ENCODE measurements at regions of chrX and their contacts with region 1.

Region 1: GRCh38 chrX:68807818-68808217 is 21.0 kb upstream of the EFNB1 start:
- DNase-seq: no peak
- H3K4me3 ChIP-seq: no peak overlapping the region
- H3K27ac ChIP-seq: no peak overlapping the region
- H3K4me1 ChIP-seq: no peaks in the 10 kb centered on the region
- H3K27me3 ChIP-seq: no peaks in the 10 kb centered on the region
- CTCF ChIP-seq: peak in 1 of 4 experiments; percentile 25
- EP300 ChIP-seq: no peak
- POLR2A ChIP-seq: no peak

Region 2: DNA sequence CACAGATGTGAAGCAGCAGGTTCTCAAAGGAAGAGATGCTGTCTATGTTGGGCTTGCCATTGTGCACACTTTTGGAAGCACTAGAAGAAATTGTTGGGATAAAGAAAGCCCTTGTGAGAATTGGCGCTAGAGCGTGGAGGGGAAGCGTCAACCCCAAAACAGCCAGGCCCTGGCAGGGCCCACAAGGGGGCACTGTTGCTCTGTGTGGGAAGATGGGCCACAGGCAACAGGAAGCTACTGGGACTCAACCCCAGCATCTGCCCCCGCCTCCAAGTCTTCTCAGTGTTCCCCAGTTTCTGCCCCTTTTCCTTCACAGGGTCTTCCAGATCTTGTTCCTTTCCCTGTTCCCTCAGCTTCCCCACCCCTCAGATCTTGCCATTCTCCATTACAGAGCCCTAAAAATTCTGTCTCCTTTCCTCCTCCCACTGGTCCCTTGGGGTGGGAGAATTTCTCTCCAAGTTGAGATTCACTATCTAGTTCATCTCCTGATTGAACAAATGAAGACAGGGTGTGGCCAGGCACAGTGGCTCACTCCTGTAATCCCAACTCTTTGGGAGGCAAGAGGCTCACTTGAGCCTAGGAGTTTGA is 74.8 kb before region 1 on chrX:
- intact Hi-C with region 1: loop called (anchors 2 kb)
- DNase-seq: peak; percentile 78
- H3K4me3 ChIP-seq: no peak overlapping the region
- H3K27ac ChIP-seq: no peak overlapping the region
- H3K4me1 ChIP-seq: no peaks in the 10 kb centered on the region
- H3K27me3 ChIP-seq: no peaks in the 10 kb centered on the region
- CTCF ChIP-seq: peak; percentile 13 to 68 (median 38)
- EP300 ChIP-seq: no peak
- POLR2A ChIP-seq: no peak

Region 3: DNA sequence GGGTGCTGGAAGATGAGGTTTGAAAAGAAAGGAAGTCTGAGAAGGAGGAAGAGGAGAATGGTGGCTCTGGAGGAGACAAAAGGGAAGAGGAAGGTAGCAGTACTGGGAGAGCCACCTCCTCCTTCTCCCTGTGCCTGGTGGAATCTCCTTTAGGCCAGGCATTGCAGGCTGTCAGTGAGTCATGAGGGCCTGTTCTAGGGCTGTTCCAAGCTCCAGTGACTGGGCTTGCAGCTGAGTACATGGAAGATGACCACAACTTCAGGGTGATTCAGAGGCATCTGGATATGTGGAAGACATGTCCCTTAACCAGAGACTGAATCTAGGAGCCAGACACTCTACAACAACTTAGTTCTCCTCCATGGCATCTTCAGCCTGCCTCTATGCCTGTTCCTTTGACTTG is 128.8 kb after region 1 on chrX:
- intact Hi-C with region 1: no loop called
- DNase-seq: peak; percentile 46
- H3K4me3 ChIP-seq: no peak overlapping the region
- H3K27ac ChIP-seq: no peak overlapping the region
- H3K4me1 ChIP-seq: peaks cover 0 to 4% (median 0%) of the 10 kb centered on the region in 4 donors
- H3K27me3 ChIP-seq: no peaks in the 10 kb centered on the region
- CTCF ChIP-seq: no peak
- EP300 ChIP-seq: no peak
- POLR2A ChIP-seq: no peak

Region 4: GRCh38 chrX:68995780-68996551 is 188.1 kb after region 1 on chrX:
- intact Hi-C with region 1: no loop called
- DNase-seq: no peak
- H3K4me3 ChIP-seq: no peak overlapping the region
- H3K27ac ChIP-seq: peak overlapping the region; percentile 64 to 72 (median 70)
- H3K4me1 ChIP-seq: peaks cover 0 to 27% (median 23%) of the 10 kb centered on the region in 4 donors
- H3K27me3 ChIP-seq: no peaks in the 10 kb centered on the region
- CTCF ChIP-seq: no peak
- EP300 ChIP-seq: no peak
- POLR2A ChIP-seq: no peak